Dorsolateral prefrontal cortex (tissue), 120 donors: ENCODE measurements at regions of chr2 and their contacts with region 1.

Region 1: DNA sequence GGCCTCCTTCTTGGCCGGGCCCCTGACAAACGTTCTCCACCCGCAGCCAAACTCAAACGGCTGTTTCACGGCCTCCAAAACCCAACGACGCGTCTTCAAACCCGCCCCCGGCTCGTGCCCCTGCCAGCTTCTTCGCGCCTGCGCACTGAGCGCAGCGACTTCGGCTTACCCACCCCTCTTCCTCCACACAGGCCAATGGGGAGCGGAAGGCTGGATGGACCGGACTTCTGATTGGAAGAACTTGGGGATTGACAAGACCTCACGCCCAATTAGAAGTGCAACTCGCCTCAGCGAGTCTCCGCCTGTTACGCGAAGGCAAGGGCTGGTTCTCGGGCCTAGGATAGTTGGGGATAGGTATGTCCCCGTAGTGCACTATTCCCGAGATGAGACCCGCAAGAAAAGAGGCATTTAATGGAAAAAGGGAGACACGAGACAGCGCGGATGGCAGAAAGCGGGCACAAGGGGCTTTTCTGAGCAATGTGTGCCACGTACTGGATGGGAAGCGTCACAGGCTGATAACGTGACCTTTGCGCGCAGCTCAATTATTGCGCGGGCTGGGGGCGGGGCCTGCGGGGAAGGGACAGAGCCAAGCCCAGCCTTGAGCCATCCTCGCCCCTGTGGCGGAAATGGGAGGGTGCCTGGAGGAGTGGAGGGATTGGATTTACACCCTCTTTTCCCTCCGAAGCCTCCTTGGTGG is at the start of gene LAPTM4A:
- DNase-seq: peak; percentile 96 to 99 (median 98)
- H3K4me3 ChIP-seq: peak within 1 kb of the TSS; percentile 49 to 96 (median 83)
- H3K27ac ChIP-seq: peak within 1 kb of the TSS; percentile 91 to 100 (median 99)
- H3K27me3 ChIP-seq: no peaks in the 10 kb centered on the region
- CTCF ChIP-seq: peak in 32 of 56 donors; percentile 4 to 55 (median 36)
- total RNA-seq, gene LAPTM4A: 41.8 to 105 (median 65.3) TPM

Region 2: GRCh38 chr2:18560031-18560796 is 1491.5 kb before region 1 on chr2 and contains the start of gene RDH14:
- intact Hi-C with region 1: loop called in 1 of 2 experiments (anchors 5 kb)
- DNase-seq: peak; percentile 92 to 97 (median 96)
- H3K4me3 ChIP-seq: peak within 1 kb of the TSS; percentile 51 to 99 (median 83)
- H3K27ac ChIP-seq: peak within 1 kb of the TSS in 58 of 59 donors; percentile 61 to 97 (median 91)
- H3K27me3 ChIP-seq: no peaks in the 10 kb centered on the region
- CTCF ChIP-seq: peak in 31 of 56 donors; percentile 5 to 52 (median 29)
- total RNA-seq, gene RDH14: 10.3 to 25.2 (median 17.9) TPM

Region 3: GRCh38 chr2:19722531-19722971 is 329.1 kb before region 1 on chr2:
- intact Hi-C with region 1: no loop called
- DNase-seq: no peak
- H3K4me3 ChIP-seq: no peak overlapping the region
- H3K27ac ChIP-seq: no peak overlapping the region
- H3K27me3 ChIP-seq: no peaks in the 10 kb centered on the region
- CTCF ChIP-seq: no peak

Region 4: GRCh38 chr2:19901442-19902215 is 150.1 kb before region 1 on chr2 and contains the start of gene TTC32:
- intact Hi-C with region 1: loop called in 1 of 2 experiments (anchors 5 kb)
- DNase-seq: peak; percentile 87 to 94 (median 92)
- H3K4me3 ChIP-seq: peak within 1 kb of the TSS; percentile 75 to 99 (median 90)
- H3K27ac ChIP-seq: peak within 1 kb of the TSS; percentile 85 to 100 (median 97)
- H3K27me3 ChIP-seq: no peaks in the 10 kb centered on the region
- CTCF ChIP-seq: peak in 36 of 56 donors; percentile 2 to 60 (median 30)
- total RNA-seq, gene TTC32: 8.8 to 38.7 (median 18.3) TPM

Region 5: DNA sequence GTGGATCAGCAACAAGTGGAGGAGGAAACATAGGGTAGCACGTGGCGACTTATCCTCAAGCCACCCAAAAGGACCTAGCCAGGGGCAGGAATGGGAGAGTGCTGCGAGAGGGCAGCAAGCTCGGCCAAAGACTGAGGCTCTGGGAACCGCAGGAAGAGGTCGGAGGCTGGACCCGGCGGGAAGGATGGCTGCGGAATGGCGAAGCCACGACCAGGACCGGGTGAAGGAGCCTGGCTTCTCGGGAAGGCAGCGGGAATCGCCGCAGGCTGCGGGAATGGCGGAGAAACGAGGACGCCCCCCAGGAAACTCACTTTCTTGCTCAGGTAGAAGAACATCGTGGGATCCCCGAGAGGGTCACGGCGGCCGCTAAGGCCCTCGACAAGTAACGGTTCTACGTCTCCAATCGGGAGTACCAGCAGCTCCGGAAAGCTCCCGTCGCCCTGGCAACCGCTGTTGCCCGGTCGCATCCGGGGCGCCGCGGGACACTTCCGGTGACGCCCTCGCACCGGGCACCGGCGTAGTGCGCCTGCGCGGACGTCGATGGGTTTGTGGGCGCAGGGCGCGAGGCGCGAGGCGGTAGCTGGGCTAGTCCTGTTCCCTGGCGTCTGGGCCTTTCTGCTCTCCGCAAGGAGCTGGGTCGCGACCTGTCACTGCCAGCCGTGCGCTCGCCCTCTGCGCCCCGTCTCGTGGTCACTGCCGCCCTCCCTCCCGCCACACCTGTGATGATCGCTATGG is 61.8 kb before region 1 on chr2 and contains the start of gene WDR35:
- intact Hi-C with region 1: loop called (anchors 2 kb)
- DNase-seq: peak; percentile 83 to 96 (median 87)
- H3K4me3 ChIP-seq: peak within 1 kb of the TSS; percentile 61 to 97 (median 87)
- H3K27ac ChIP-seq: peak within 1 kb of the TSS in 41 of 59 donors; percentile 5 to 90 (median 61)
- H3K27me3 ChIP-seq: no peaks in the 10 kb centered on the region
- CTCF ChIP-seq: peak in 23 of 56 donors; percentile 14 to 50 (median 31)
- total RNA-seq, gene WDR35: 7.1 to 18.1 (median 12.9) TPM

Region 6: DNA sequence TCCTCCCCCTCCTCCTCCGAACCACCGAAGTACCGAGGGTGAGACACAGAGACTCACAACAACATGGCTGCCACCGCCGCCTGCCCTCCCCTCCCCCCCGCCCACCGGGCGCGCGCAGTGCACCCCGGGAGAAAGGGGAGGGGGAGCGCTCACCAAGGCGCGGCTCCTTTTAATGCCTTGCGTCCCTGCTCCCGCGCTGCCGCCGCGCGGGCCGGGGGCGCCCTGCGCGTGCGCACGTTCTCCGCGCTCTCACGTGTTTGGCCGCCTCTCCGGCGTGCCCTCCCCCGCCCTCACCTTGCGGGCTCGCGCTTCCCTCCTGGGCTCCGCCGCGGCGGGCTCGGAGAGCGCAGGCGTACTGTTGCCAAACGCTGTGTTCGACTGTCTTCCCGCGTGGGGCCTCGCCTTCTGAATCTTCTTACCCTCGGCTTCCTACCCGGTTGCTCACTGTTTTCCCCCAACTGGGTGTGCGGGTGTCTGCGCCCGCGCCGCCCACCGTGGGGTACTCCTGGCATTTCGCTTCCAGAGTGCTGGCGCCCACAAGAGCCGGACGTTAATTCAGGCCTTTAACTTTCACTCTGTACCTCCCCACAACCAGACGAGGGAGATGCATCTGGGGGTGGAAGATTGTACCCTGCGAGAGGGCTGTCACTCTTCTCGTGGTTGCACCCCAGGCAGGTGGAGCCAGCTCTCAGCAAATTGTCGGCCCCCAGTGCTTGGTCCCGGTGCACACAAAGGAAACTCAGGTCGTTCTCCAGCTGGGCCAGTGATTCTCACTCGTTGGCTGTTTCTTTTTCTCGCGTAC is 299.3 kb after region 1 on chr2 and contains the start of gene PUM2:
- intact Hi-C with region 1: loop called in 1 of 2 experiments (anchors 2 kb)
- DNase-seq: peak; percentile 86 to 98 (median 91)
- H3K4me3 ChIP-seq: peak within 1 kb of the TSS; percentile 75 to 97 (median 89)
- H3K27ac ChIP-seq: peak within 1 kb of the TSS; percentile 86 to 99 (median 96)
- H3K27me3 ChIP-seq: no peaks in the 10 kb centered on the region
- CTCF ChIP-seq: peak in 27 of 56 donors; percentile 1 to 42 (median 17)
- total RNA-seq, gene PUM2: 107 to 165 (median 131) TPM